Activated T-helper 1 cell treated with anti-CD3 and anti-CD28 coated beads, Interleukin-12 subunit alpha, Interleukin-12 subunit beta, Interleukin-2, Interleukin-4 antibody, amounts not matched to agents 30 ng/mL and 10 ng/mL and 1 ng/mL, durations not matched to agents 14 hours and 24 hours and 36 hours (primary cell): ENCODE measurements at regions of chr2 and their contacts with region 1.

Region 1: GRCh38 chr2:152025678-152026287 is 73.1 kb downstream of the CACNB4 start:
- DNase-seq: peak; percentile 65
- H3K4me3 Mint-ChIP-seq: peak overlapping the region; percentile 72
- H3K27ac Mint-ChIP-seq: peak overlapping the region; percentile 36
- H3K4me1 Mint-ChIP-seq: peaks cover 11% of the 10 kb centered on the region
- H3K27me3 Mint-ChIP-seq: peaks cover 20% of the 10 kb centered on the region

Region 2: DNA sequence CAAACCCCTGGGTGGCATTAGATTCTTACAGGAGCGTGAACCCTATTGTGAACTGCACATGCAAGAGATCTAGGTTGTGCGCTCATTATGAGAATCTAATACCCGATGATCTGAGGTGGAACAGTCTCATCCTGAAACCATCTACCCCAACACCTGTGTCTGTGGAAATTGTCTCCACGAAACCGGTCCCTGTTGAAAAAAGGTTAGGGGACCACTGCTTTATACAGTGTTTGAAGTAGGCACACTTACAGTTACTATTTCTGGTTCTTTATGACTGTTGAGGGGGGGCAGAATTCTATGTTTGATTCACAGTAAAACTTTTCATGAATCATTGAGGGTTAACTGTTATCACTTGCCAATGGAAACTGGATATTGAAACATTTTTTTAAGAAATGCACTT is 544.0 kb before region 1 on chr2:
- intact Hi-C with region 1: loop called (anchors 10 kb)
- DNase-seq: no peak
- H3K4me3 Mint-ChIP-seq: no peak overlapping the region
- H3K27ac Mint-ChIP-seq: peak overlapping the region; percentile 65
- H3K4me1 Mint-ChIP-seq: peaks cover 35% of the 10 kb centered on the region
- H3K27me3 Mint-ChIP-seq: no peaks in the 10 kb centered on the region

Region 3: GRCh38 chr2:151840216-151841046 is 185.4 kb before region 1 on chr2:
- intact Hi-C with region 1: no loop called
- DNase-seq: no peak
- H3K4me3 Mint-ChIP-seq: no peak overlapping the region
- H3K27ac Mint-ChIP-seq: no peak overlapping the region
- H3K4me1 Mint-ChIP-seq: no peaks in the 10 kb centered on the region
- H3K27me3 Mint-ChIP-seq: peaks cover 7% of the 10 kb centered on the region

Region 4: GRCh38 chr2:151999053-151999452 is 26.7 kb before region 1 on chr2:
- intact Hi-C with region 1: loop called (anchors 1 kb)
- DNase-seq: no peak
- H3K4me3 Mint-ChIP-seq: no peak overlapping the region
- H3K27ac Mint-ChIP-seq: no peak overlapping the region
- H3K4me1 Mint-ChIP-seq: peaks cover 1% of the 10 kb centered on the region
- H3K27me3 Mint-ChIP-seq: peaks cover 2% of the 10 kb centered on the region

Region 5: GRCh38 chr2:152036611-152037469 is 11.1 kb after region 1 on chr2:
- intact Hi-C with region 1: no loop called
- DNase-seq: peak; percentile 9
- H3K4me3 Mint-ChIP-seq: no peak overlapping the region
- H3K27ac Mint-ChIP-seq: no peak overlapping the region
- H3K4me1 Mint-ChIP-seq: no peaks in the 10 kb centered on the region
- H3K27me3 Mint-ChIP-seq: peaks cover 5% of the 10 kb centered on the region